HepG2 (cell line): ENCODE measurements at regions of chr16 and their contacts with region 1.

Region 1: GRCh38 chr16:56041686-56042085 is 149.6 kb upstream of the GNAO1 start:
- DNase-seq: peak; percentile 45
- ATAC-seq: peak; percentile 100
- H3K4me3 ChIP-seq: no peak overlapping the region
- H3K27ac ChIP-seq: no peak overlapping the region
- H3K4me1 ChIP-seq: no peaks in the 10 kb centered on the region
- H3K27me3 ChIP-seq: no peaks in the 10 kb centered on the region
- CTCF ChIP-seq: peak; percentile 81
- EP300 ChIP-seq: no peak
- POLR2A ChIP-seq: no peak
- RAD21 ChIP-seq: peak; percentile 72

Region 2: GRCh38 chr16:56005958-56006357 is 35.7 kb before region 1 on chr16:
- CTCF ChIA-PET with region 1: no interaction called
- POLR2A ChIA-PET with region 1: no interaction called
- in situ Hi-C with region 1: no loop called
- intact Hi-C with region 1: no loop called
- DNase-seq: no peak
- ATAC-seq: no peak
- H3K4me3 ChIP-seq: no peak overlapping the region
- H3K27ac ChIP-seq: no peak overlapping the region
- H3K4me1 ChIP-seq: no peaks in the 10 kb centered on the region
- H3K27me3 ChIP-seq: no peaks in the 10 kb centered on the region
- CTCF ChIP-seq: no peak
- EP300 ChIP-seq: no peak
- POLR2A ChIP-seq: no peak
- RAD21 ChIP-seq: no peak

Region 3: DNA sequence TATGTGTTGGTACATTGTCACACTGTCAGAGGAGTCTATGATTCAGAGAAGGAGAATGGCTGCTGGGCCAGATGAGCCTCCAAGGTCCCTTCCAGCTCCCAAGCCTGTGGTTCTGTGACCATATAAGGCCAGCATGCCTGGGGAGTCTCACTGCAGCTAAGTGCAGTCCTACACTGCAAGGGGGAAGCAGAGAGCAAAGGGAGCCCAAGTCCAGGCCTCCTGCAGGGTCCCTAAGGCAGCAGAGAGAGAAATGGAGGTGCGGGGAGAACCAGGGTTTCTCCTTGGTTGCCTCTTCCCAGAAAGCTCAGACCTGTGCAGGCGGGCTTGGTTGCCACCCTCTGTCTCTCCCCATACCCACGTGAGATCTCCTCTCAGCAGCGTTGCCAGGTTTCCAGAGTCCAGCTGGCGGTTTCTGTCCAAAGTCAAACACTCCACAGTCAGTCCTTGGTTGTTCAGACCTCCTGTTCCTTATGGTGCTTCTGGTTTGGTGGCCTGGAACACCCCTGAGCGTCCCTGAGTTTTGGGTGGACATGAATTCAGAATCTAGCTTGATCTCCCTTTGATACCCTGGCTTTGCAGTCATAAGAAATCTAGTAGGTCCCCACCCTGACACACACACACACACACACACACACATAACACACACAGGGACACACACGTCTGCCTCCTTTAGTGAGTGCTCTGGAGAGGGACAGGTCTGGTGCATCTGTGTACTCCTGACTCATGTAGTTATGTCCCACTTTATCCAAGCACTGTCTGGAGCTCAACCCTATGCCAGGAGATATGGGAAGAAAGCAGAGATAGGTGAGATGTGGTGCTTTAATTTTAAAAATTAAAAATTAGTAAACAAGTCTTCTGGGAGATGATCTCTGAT is 228.4 kb after region 1 on chr16:
- CTCF ChIA-PET with region 1: no interaction called
- POLR2A ChIA-PET with region 1: no interaction called
- in situ Hi-C with region 1: loop called (anchors 10 kb)
- intact Hi-C with region 1: no loop called
- DNase-seq: peak; percentile 52
- ATAC-seq: peak; percentile 97
- H3K4me3 ChIP-seq: no peak overlapping the region
- H3K27ac ChIP-seq: no peak overlapping the region
- H3K4me1 ChIP-seq: peaks cover 12% of the 10 kb centered on the region
- H3K27me3 ChIP-seq: peaks cover 2 to 9% of the 10 kb centered on the region in 2 experiments; a peak in 3 of 5 replicates
- CTCF ChIP-seq: peak; percentile 39; the same call in 1 of the 2 replicates
- EP300 ChIP-seq: no peak
- POLR2A ChIP-seq: no peak
- RAD21 ChIP-seq: no peak

Region 4: GRCh38 chr16:56281256-56281805 is 239.6 kb after region 1 on chr16:
- CTCF ChIA-PET with region 1: interaction called, 6 read pairs
- POLR2A ChIA-PET with region 1: no interaction called
- in situ Hi-C with region 1: loop called (anchors 10 kb)
- intact Hi-C with region 1: loop called (anchors 1 kb)
- DNase-seq: peak; percentile 24
- ATAC-seq: peak; percentile 71
- H3K4me3 ChIP-seq: no peak overlapping the region
- H3K27ac ChIP-seq: no peak overlapping the region
- H3K4me1 ChIP-seq: no peaks in the 10 kb centered on the region
- H3K27me3 ChIP-seq: peaks cover 0 to 4% of the 10 kb centered on the region in 2 experiments; a peak in 2 of 5 replicates
- CTCF ChIP-seq: peak; percentile 46
- EP300 ChIP-seq: no peak
- POLR2A ChIP-seq: no peak
- RAD21 ChIP-seq: no peak

Region 5: GRCh38 chr16:56317998-56318826 is 276.5 kb after region 1 on chr16:
- CTCF ChIA-PET with region 1: interaction called, 16 read pairs
- POLR2A ChIA-PET with region 1: no interaction called
- in situ Hi-C with region 1: loop called (anchors 5 kb)
- intact Hi-C with region 1: no loop called
- DNase-seq: peak; percentile 62
- ATAC-seq: peak; percentile 95
- H3K4me3 ChIP-seq: peak overlapping the region in 1 of 3 experiments; percentile 11; a peak in 1 of 6 replicates
- H3K27ac ChIP-seq: no peak overlapping the region
- H3K4me1 ChIP-seq: no peaks in the 10 kb centered on the region
- H3K27me3 ChIP-seq: peaks cover 3 to 65% of the 10 kb centered on the region in 2 experiments
- CTCF ChIP-seq: peak; percentile 98
- EP300 ChIP-seq: no peak
- POLR2A ChIP-seq: no peak
- RAD21 ChIP-seq: peak; percentile 96

Region 6: GRCh38 chr16:56324406-56324805 is 282.7 kb after region 1 on chr16:
- CTCF ChIA-PET with region 1: interaction called, 16 read pairs
- POLR2A ChIA-PET with region 1: no interaction called
- in situ Hi-C with region 1: loop called (anchors 5 kb)
- intact Hi-C with region 1: no loop called
- DNase-seq: no peak
- ATAC-seq: no peak
- H3K4me3 ChIP-seq: no peak overlapping the region
- H3K27ac ChIP-seq: no peak overlapping the region
- H3K4me1 ChIP-seq: no peaks in the 10 kb centered on the region
- H3K27me3 ChIP-seq: peaks cover 9 to 76% of the 10 kb centered on the region in 2 experiments
- CTCF ChIP-seq: no peak
- EP300 ChIP-seq: no peak
- POLR2A ChIP-seq: no peak
- RAD21 ChIP-seq: no peak